Astrocyte of the cerebellum (primary cell): ENCODE measurements at regions of chr1 and their contacts with region 1.

Region 1: GRCh38 chr1:169155675-169156074 is 49.2 kb downstream of the ATP1B1 start:
- DNase-seq: no peak
- H3K4me3 ChIP-seq: no peak overlapping the region
- CTCF ChIP-seq: no peak

Region 2: DNA sequence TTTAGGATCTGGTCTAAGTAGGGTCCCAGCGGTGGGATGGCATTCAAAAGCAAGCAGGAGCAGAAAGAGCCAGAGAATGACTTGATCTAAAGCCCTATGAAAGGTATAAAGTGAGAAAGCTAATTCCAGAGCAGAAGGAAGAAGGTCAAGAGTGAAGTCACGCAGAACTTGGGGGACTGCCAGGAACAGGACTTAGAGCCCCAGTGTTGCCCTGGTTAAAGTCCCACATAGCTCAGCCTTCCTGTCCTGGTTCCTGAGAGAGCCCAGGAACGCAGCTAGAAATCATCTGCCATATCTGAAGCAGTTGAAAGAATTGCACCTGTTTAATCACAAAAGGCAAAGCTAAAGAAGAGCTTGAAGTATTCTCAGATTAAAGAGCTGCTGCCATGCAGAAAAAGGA is 209.8 kb before region 1 on chr1:
- in situ Hi-C with region 1: no loop called
- DNase-seq: no peak
- H3K4me3 ChIP-seq: no peak overlapping the region
- CTCF ChIP-seq: no peak

Region 3: GRCh38 chr1:169217636-169218035 is 62.0 kb after region 1 on chr1:
- in situ Hi-C with region 1: loop called (anchors 5 kb)
- DNase-seq: no peak
- H3K4me3 ChIP-seq: no peak overlapping the region
- CTCF ChIP-seq: no peak

Region 4: DNA sequence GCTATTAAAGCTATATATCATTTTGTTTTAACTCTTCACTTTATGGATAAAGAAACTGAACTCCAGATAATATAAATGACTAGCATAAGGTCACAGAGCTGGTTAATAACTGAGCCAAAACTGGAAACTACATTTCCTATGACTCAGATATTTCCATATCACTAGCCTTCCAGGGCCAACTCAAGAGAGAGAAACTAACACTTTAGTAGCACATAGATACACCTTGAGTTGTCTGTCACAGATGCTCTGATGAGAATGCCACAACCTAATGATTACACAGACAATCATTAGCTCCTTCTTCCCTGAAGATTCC is 171.2 kb after region 1 on chr1:
- in situ Hi-C with region 1: no loop called
- DNase-seq: peak; percentile 16
- H3K4me3 ChIP-seq: no peak overlapping the region
- CTCF ChIP-seq: no peak